ENCODE measurements at regions of chr6 and their contacts with region 1.

Region 1: DNA sequence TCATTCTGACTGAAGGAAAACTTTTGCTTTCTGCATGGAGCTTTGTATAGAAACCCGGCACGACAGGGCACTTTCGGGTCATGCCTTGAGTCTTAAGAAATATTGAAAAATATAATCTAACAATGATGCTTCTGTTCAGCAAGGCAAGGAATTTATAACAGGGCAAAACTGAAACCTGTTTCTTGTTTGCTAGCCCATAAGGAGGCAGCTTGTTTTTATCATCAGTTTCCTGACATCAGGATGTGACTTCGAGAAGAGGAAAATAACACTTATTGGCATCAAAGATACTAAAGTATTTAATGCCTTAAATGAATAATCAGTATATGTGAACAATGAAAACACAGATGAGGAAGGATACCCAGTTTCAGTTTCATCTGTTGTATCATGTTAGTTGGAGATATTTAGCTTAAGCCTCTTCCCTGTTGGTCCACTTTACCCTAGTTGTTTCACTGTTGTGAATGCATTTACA is 146.5 kb downstream of the CDKAL1 start:
- DNase-seq: peak; percentile 55
- H3K4me3 ChIP-seq: no peak overlapping the region
- H3K27ac ChIP-seq: peak overlapping the region; percentile 16
- H3K4me1 ChIP-seq: peaks cover 3% of the 10 kb centered on the region
- H3K27me3 ChIP-seq: no peaks in the 10 kb centered on the region
- CTCF ChIP-seq: no peak

Region 2: GRCh38 chr6:20985821-20986220 is 305.1 kb after region 1 on chr6:
- CTCF ChIA-PET with region 1: interaction called, 10 read pairs
- dilution Hi-C with region 1: no loop called
- in situ Hi-C with region 1: no loop called
- intact Hi-C with region 1: no loop called
- DNase-seq: no peak
- H3K4me3 ChIP-seq: no peak overlapping the region
- H3K27ac ChIP-seq: no peak overlapping the region
- H3K4me1 ChIP-seq: no peaks in the 10 kb centered on the region
- H3K27me3 ChIP-seq: no peaks in the 10 kb centered on the region
- CTCF ChIP-seq: no peak

Measured in mammary epithelial cell (primary cell).